CD8-positive, alpha-beta T cell (primary cell): ENCODE measurements at regions of chr17 and their contacts with region 1.

Region 1: GRCh38 chr17:81601525-81602120 is 35.3 kb downstream of the NPLOC4 start:
- DNase-seq: peak; percentile 3 to 76 (median 35)
- ATAC-seq: peak; percentile 97
- H3K4me3 ChIP-seq: no peak overlapping the region
- H3K4me3 Mint-ChIP-seq: no peak overlapping the region
- H3K27ac ChIP-seq: no peak overlapping the region
- H3K27ac Mint-ChIP-seq: no peak overlapping the region
- H3K4me1 ChIP-seq: no peaks in the 10 kb centered on the region
- H3K4me1 Mint-ChIP-seq: peaks cover 5% of the 10 kb centered on the region
- H3K27me3 ChIP-seq: no peaks in the 10 kb centered on the region
- H3K27me3 Mint-ChIP-seq: no peaks in the 10 kb centered on the region
- CTCF ChIP-seq: peak; percentile 85

Region 2: DNA sequence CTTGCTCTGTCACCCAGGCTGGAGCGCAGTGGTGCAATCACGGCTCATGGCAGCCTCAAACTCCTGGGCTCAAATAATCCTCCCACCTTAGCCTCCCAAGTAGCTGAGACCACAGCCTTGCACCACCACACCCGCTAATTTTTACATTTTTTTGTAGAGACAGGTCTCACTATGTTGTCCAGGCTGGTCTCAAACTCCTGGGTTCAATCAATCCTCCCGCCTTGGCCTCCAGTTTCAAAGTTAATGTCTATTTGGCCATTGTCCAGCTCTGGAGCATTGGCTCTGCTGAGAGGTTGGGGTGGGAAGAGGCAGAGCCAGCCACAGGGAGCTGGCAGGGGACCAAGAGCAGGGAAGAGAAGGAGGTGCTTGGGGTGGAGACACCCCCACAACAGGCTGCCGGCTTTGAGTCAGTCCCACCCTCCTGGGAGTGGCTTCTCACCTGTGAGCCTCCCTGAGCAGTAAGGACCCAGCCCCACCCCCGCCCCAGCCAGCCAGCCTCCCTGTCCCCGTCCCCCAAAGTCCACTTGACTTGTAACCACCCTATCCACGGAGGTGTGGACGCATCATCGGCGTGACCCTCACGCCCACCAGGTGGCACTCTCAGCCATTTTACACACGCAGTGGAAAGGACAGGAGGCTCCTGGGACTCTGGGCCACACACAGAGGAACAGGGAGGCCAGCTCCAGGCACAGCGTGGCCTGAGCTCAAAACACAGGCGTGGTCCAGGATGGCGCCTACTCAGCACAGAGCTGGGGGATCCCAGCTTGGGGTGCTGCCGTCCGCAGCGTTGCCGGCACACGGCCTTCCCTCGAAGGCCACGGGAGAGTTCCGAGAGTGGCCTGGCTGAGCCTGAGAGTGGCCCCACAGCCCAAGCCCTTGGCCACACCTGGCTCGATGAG is 459.1 kb before region 1 on chr17:
- CTCF ChIA-PET with region 1: interaction called, 5 read pairs
- POLR2A ChIA-PET with region 1: no interaction called
- intact Hi-C with region 1: loop called in 1 of 2 experiments (anchors 5 kb)
- DNase-seq: peak; percentile 44 to 73 (median 57)
- ATAC-seq: peak; percentile 72
- H3K4me3 ChIP-seq: no peak overlapping the region
- H3K4me3 Mint-ChIP-seq: no peak overlapping the region
- H3K27ac ChIP-seq: no peak overlapping the region
- H3K27ac Mint-ChIP-seq: no peak overlapping the region
- H3K4me1 ChIP-seq: no peaks in the 10 kb centered on the region
- H3K4me1 Mint-ChIP-seq: no peaks in the 10 kb centered on the region
- H3K27me3 ChIP-seq: peaks cover 0 to 4% of the 10 kb centered on the region in 2 experiments
- H3K27me3 Mint-ChIP-seq: peaks cover 4% of the 10 kb centered on the region
- CTCF ChIP-seq: peak; percentile 47

Region 3: GRCh38 chr17:81253358-81254131 is 348.1 kb before region 1 on chr17:
- CTCF ChIA-PET with region 1: interaction called, 19 read pairs
- POLR2A ChIA-PET with region 1: no interaction called
- intact Hi-C with region 1: loop called in 1 of 2 experiments (anchors 1 kb)
- DNase-seq: peak; percentile 32 to 78 (median 64)
- ATAC-seq: peak; percentile 89
- H3K4me3 ChIP-seq: no peak overlapping the region
- H3K4me3 Mint-ChIP-seq: no peak overlapping the region
- H3K27ac ChIP-seq: no peak overlapping the region
- H3K27ac Mint-ChIP-seq: peak overlapping the region; percentile 52
- H3K4me1 ChIP-seq: peaks cover 8% of the 10 kb centered on the region
- H3K4me1 Mint-ChIP-seq: peaks cover 13% of the 10 kb centered on the region
- H3K27me3 ChIP-seq: no peaks in the 10 kb centered on the region
- H3K27me3 Mint-ChIP-seq: no peaks in the 10 kb centered on the region
- CTCF ChIP-seq: peak; percentile 80

Region 4: DNA sequence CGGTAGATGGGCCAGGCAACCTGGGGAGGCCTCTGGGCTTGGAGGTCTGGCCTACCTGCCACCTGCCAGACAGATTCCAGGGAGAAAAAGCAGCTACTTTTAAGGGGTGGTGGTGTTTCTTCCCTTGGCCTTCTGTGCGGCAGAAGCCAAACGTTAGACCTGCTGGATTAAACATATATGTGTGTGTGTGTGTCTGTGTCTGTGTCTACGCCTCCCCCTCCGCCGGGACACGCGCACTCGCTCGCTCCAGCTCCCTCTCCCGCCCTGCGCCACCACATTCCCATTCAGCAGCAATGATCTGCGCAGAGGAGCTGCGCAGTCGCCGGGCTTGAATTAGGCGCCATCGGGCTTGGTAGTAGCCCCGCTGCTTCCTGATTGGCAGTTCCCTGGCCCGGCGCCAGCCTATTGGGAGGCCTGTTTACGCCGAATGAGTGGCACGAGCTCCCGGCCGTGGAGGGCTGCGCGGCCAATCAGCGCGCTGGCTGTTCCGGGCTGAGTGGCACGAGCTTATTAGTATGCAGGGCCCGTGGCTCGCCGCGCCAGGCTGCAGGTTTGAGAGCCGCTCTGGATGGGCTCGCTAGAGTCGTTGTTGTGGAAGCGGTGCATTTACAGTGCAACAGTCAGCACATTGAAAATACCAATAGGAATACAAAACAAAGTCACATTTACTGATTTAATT is 206.6 kb before region 1 on chr17 and contains the start of gene BAHCC1:
- CTCF ChIA-PET with region 1: no interaction called
- POLR2A ChIA-PET with region 1: no interaction called
- intact Hi-C with region 1: no loop called
- DNase-seq: peak; percentile 45 to 87 (median 77)
- ATAC-seq: peak; percentile 65
- H3K4me3 ChIP-seq: no peak within 1 kb of the TSS
- H3K4me3 Mint-ChIP-seq: peak within 1 kb of the TSS; percentile 43
- H3K27ac ChIP-seq: no peak within 1 kb of the TSS
- H3K27ac Mint-ChIP-seq: no peak within 1 kb of the TSS
- H3K4me1 ChIP-seq: peaks cover 56% of the 10 kb centered on the region
- H3K4me1 Mint-ChIP-seq: peaks cover 29% of the 10 kb centered on the region
- H3K27me3 ChIP-seq: peaks cover 69 to 70% of the 10 kb centered on the region in 2 experiments
- H3K27me3 Mint-ChIP-seq: peaks cover 47% of the 10 kb centered on the region
- CTCF ChIP-seq: no peak
- total RNA-seq, gene BAHCC1: 0.08 to 0.24 TPM

Region 5: GRCh38 chr17:81519284-81519955 is 82.2 kb before region 1 on chr17:
- CTCF ChIA-PET with region 1: interaction called, 24 read pairs
- POLR2A ChIA-PET with region 1: interaction called, 5 read pairs
- intact Hi-C with region 1: loop called (anchors 1 kb)
- DNase-seq: peak; percentile 37 to 86 (median 74)
- ATAC-seq: peak; percentile 70
- H3K4me3 ChIP-seq: peak overlapping the region; percentile 37 to 60
- H3K4me3 Mint-ChIP-seq: peak overlapping the region; percentile 32
- H3K27ac ChIP-seq: no peak overlapping the region
- H3K27ac Mint-ChIP-seq: no peak overlapping the region
- H3K4me1 ChIP-seq: peaks cover 42% of the 10 kb centered on the region
- H3K4me1 Mint-ChIP-seq: peaks cover 30% of the 10 kb centered on the region
- H3K27me3 ChIP-seq: peaks cover 0 to 13% of the 10 kb centered on the region in 2 experiments
- H3K27me3 Mint-ChIP-seq: peaks cover 2% of the 10 kb centered on the region
- CTCF ChIP-seq: peak; percentile 96

Region 6: GRCh38 chr17:81590121-81590520 is 11.5 kb before region 1 on chr17:
- CTCF ChIA-PET with region 1: interaction called, 27 read pairs
- POLR2A ChIA-PET with region 1: no interaction called
- intact Hi-C with region 1: no loop called
- DNase-seq: no peak
- ATAC-seq: no peak
- H3K4me3 ChIP-seq: no peak overlapping the region
- H3K4me3 Mint-ChIP-seq: no peak overlapping the region
- H3K27ac ChIP-seq: no peak overlapping the region
- H3K27ac Mint-ChIP-seq: no peak overlapping the region
- H3K4me1 ChIP-seq: no peaks in the 10 kb centered on the region
- H3K4me1 Mint-ChIP-seq: no peaks in the 10 kb centered on the region
- H3K27me3 ChIP-seq: no peaks in the 10 kb centered on the region
- H3K27me3 Mint-ChIP-seq: no peaks in the 10 kb centered on the region
- CTCF ChIP-seq: no peak